Activated CD8-positive, alpha-beta T cell treated with anti-CD3 and anti-CD28 coated beads, Interleukin-2, amount 10 ng/mL, durations not matched to agents 7 days and 5 days (primary cell): ENCODE measurements at regions of chr14 and their contacts with region 1.

Region 1: DNA sequence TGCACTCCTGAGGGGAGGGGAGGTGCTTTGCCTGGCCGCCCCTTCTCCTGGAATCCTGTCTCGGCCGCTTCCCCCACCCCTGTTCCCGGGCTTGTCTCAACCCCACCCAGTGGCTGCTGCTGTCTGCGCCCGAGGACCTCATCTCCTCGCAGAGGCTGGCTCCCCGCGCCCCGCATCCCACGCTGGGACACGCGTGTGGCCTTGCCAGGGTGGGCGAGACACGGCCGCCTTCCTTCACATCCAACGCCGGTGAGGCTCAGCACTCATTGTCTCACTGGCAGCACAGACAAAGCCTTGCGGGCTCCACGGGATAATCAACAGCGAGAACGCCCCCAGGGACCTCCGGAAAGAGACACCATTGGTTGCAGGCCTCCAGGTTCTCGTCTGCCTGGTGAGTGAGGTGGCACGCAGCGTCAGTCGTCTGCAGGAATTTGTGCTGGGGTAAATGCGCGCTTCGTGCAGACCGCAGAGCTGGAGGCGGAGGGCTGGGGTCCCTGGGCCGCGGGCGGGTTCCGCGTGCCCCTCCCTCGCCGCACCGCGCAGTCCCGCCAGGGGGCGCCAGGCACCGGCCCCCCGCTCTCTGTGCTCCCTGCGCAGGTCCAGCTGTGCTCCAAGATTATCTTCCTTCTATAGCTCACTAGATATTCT is 26.8 kb downstream of the CCDC177 start:
- DNase-seq: peak; percentile 37
- ATAC-seq: peak; percentile 43
- H3K4me3 Mint-ChIP-seq: no peak overlapping the region
- H3K27ac Mint-ChIP-seq: no peak overlapping the region
- H3K4me1 Mint-ChIP-seq: peaks cover 20% of the 10 kb centered on the region
- H3K27me3 Mint-ChIP-seq: peaks cover 35% of the 10 kb centered on the region

Region 2: DNA sequence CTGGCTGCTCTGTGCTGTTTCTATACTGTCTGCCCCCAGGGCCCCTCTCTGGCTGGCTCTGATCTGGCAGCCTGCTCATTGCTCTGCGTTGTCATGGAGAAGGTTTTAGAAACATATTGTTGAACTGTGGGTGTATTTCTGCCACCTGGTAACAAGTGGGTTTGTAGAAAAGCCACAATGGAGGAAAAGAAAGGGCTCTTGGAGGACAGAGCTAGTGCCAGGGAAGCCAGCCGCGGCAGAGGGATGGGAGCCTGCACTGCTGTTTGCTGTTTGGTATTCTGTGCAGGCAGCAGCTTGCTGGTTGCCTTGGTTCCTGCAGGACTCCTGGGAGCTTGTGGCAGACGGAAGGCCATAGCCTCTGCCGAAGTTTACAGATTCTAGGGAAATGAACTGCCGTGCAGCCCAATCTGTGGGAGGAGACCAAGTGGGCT is 11.8 kb after region 1 on chr14:
- CTCF ChIA-PET with region 1: interaction called, 12 read pairs
- POLR2A ChIA-PET with region 1: no interaction called
- DNase-seq: no peak
- ATAC-seq: peak; percentile 11
- H3K4me3 Mint-ChIP-seq: no peak overlapping the region
- H3K27ac Mint-ChIP-seq: no peak overlapping the region
- H3K4me1 Mint-ChIP-seq: no peaks in the 10 kb centered on the region
- H3K27me3 Mint-ChIP-seq: peaks cover 34% of the 10 kb centered on the region

Region 3: DNA sequence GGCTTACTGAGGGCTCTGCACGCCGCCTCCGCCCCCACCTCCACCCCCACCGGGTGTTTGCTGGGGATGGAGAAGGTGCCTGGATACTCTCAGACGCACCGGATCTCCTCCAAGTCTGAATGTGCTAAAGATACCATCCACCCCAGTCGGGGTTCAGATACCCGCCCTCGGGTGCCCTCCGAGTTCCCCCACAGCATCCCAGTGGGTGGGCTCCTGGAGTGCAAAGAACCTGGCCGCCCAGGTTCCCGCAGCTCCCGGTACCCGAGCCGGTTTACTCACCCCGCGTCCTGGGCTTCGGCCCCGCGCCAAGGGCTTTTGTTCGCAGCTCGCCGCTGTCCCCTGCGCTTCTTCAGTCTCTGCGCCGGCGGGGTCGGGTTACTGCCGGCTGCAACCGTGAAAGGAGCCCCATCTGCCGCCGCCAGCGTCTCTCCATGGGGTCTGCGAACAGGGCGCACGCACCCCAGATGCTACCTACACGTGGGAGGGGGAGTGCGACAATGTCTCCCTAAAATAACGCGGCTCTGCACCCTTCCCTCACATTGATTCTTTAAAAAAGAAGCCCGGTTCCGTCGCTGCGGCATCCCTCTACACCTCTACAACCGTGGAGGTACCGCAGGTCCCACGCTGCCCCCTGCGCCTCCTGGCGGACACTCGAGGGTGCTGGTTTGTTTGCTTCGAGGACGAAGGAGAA is 26.6 kb after region 1 on chr14 and contains the start of gene CCDC177:
- CTCF ChIA-PET with region 1: interaction called, 14 read pairs
- POLR2A ChIA-PET with region 1: interaction called, 3 read pairs
- DNase-seq: peak; percentile 80
- ATAC-seq: peak; percentile 80
- H3K4me3 Mint-ChIP-seq: peak within 1 kb of the TSS; percentile 62
- H3K27ac Mint-ChIP-seq: no peak within 1 kb of the TSS
- H3K4me1 Mint-ChIP-seq: peaks cover 8% of the 10 kb centered on the region
- H3K27me3 Mint-ChIP-seq: peaks cover 61% of the 10 kb centered on the region
- total RNA-seq, gene CCDC177: not detected